PC-9 (cell line): ENCODE measurements at regions of chr4 and their contacts with region 1.

Region 1: DNA sequence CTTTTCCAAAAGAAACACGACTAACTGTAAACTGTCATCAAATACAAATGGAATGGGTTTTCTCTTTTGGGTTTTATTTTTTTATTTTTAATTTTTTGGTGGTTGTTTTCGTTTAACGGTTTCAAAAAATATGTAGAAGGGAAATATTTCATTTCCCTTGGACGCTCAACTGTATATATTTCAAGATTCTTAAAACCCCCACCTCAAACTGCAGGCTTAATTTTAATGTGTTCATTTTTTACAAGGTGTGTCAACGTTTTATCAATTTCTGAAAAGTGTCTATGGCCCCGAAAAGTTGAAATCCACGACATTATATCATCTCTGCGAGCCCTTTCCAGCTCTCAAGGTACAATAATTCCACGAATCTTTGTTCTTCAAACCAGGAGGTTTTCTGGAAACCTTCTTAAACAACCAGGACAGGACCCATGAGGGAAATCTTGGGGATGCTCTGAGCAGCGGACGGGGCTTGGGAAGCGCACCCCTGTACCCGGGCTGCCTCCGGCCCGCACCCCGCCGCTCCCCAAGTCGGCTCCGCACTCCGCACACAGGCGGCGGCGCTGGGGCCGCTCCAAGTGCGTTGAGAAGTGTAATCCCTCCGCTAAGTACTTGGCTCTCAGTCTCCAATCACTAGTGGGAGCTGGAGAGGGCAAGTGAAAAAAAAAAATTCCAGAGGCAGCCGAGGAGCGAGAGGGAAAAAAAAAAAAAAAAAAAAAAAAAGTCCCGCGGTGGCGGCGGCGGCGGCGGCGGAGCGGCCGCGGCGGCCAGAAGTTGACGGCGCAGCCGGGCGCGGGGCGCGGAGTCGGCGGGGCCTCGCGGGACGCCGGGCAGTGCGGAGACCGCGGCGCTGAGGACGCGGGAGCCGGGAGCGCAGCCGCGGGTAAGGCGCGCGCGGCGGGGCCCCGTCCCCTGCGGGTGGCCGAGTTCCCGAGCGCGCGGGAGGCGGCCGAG is at the start of gene BMPR1B:
- DNase-seq: peak in 1 of 2 experiments; percentile 34
- H3K4me3 ChIP-seq: peak within 1 kb of the TSS; percentile 57
- H3K27ac ChIP-seq: no peak within 1 kb of the TSS
- H3K4me1 ChIP-seq: 0 out of 2 replicates have a peak, but pooled peaks cover 4% of the 10 kb centered on the region
- H3K27me3 ChIP-seq: peaks cover 11% of the 10 kb centered on the region
- CTCF ChIP-seq: no peak; the same call in 1 of the 2 replicates
- total RNA-seq, gene BMPR1B: 1.1 and 3.2 TPM in 2 replicates

Region 2: DNA sequence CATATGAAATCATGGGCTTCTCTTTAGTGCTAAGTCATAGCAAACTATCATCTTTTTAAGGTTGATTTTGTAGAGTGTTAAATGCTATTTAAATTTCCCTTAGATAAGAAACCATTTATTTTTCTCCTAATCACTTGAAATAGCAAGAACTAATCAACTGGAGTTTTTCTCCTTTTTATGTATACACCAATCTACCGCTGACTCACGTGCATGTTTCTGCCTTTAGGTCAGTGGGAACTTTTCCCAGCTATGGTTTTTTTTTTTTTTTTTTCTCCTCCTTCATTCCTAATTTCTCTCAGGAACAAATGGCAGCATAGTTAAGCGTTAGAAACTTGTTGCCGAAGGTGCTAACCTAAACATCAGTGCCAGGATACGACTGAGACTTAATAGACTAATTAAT is 176.7 kb after region 1 on chr4:
- CTCF ChIA-PET with region 1: no interaction called
- POLR2A ChIA-PET with region 1: no interaction called
- intact Hi-C with region 1: loop called (anchors 10 kb)
- DNase-seq: no peak
- H3K4me3 ChIP-seq: no peak overlapping the region
- H3K27ac ChIP-seq: peak overlapping the region; percentile 63
- H3K4me1 ChIP-seq: peaks cover 19% of the 10 kb centered on the region
- H3K27me3 ChIP-seq: no peaks in the 10 kb centered on the region
- CTCF ChIP-seq: no peak